WTC11 (cell line): ENCODE measurements at regions of chr20 and their contacts with region 1.

Region 1: DNA sequence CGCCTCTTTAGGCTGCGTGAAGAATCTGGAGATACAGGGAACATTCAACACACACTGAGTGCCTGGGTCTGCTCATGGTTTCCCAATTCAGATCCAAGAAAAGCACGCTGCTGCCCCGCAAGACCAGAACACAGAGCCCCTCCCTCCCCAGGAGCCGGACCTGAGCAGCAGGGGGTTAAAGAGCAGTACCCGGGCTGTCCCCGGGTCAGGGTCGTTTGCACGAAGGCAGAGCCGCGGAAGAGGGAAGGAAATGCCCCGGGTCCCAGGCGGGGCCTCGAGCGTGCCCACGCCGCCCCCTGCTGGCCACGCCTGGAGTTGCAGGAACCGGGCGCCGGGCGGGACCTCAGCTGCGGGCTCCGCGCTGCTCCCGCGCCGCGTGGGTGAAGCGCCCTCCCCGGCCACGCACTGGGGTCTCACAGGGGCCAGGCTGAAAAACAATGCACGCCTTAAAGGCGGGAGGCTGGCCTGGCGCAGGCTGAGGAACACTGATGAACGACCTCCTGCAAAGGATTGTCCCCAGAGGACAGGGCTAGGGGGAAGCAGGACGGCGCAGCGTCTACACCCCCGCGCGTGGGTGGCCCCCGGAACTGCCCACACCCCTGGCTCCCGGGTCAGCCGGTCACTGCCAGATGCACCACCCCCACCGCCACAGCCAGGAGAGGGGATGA is 48.9 kb downstream of the ANKRD60 start:
- DNase-seq: peak; percentile 73
- ATAC-seq: peak; percentile 82
- H3K4me3 Mint-ChIP-seq: peak overlapping the region; percentile 53
- H3K27ac Mint-ChIP-seq: no peak overlapping the region
- H3K4me1 Mint-ChIP-seq: peaks cover 15% of the 10 kb centered on the region
- H3K27me3 Mint-ChIP-seq: peaks cover 28% of the 10 kb centered on the region
- CTCF ChIP-seq: peak; percentile 99

Region 2: DNA sequence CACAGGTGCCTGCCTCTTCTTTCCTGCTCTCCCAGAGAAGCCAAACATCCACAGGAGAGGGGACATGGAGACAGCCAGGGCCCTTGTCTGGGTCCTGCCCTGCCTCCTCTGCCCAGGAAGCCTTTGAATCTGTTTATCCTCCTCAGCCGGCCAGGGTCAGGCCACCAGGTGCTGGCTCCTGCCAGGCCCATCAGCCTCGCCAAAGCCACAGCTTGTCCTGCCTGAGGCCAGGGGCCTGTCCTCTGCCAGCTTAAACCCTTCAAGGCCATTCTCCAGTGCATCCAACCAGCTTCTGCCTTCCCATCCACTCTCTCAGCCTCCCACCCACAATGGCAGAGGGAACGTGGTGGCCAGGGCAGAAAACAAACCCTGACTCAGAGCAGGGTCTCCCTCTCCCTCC is 205.7 kb before region 1 on chr20:
- CTCF ChIA-PET with region 1: no interaction called
- POLR2A ChIA-PET with region 1: no interaction called
- DNase-seq: no peak
- ATAC-seq: no peak
- H3K4me3 Mint-ChIP-seq: no peak overlapping the region
- H3K27ac Mint-ChIP-seq: no peak overlapping the region
- H3K4me1 Mint-ChIP-seq: no peaks in the 10 kb centered on the region
- H3K27me3 Mint-ChIP-seq: no peaks in the 10 kb centered on the region
- CTCF ChIP-seq: no peak

Region 3: DNA sequence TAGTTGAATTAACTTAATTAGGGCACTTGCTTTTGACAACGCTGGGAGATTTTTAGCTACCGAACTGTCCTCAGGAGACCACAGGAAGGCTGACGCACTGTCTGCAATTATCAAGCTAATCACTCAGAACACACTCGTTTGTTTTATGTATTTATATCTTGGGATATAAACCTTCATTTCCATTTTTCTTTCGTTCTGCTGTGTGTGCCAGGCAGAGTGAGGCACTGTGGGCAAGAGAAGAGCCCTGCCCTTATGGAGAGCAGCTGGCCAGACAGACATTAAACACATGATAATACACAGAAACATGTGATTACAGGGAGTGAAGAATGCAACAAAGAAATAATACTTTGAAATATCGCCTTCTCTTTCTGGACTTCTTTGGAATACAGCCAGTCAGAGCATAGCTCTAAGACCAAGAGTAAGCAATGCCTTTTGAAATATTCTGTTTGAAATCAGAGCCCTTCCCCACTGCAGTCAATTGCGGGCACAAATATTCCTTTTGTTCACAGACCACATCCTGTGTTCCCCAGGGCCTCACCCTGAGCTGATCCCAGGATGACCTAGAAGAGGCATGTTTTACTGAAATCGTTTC is 47.9 kb before region 1 on chr20:
- CTCF ChIA-PET with region 1: interaction called, 10 read pairs
- POLR2A ChIA-PET with region 1: no interaction called
- DNase-seq: no peak
- ATAC-seq: no peak
- H3K4me3 Mint-ChIP-seq: peak overlapping the region; percentile 34
- H3K27ac Mint-ChIP-seq: no peak overlapping the region
- H3K4me1 Mint-ChIP-seq: peaks cover 44% of the 10 kb centered on the region
- H3K27me3 Mint-ChIP-seq: no peaks in the 10 kb centered on the region; the same call in 1 of the 2 replicates
- CTCF ChIP-seq: no peak

Region 4: GRCh38 chr20:58169450-58169849 is 10.1 kb before region 1 on chr20:
- CTCF ChIA-PET with region 1: interaction called, 12 read pairs
- POLR2A ChIA-PET with region 1: no interaction called
- DNase-seq: no peak
- ATAC-seq: no peak
- H3K4me3 Mint-ChIP-seq: no peak overlapping the region
- H3K27ac Mint-ChIP-seq: no peak overlapping the region
- H3K4me1 Mint-ChIP-seq: peaks cover 5% of the 10 kb centered on the region
- H3K27me3 Mint-ChIP-seq: peaks cover 2% of the 10 kb centered on the region; the same call in 1 of the 2 replicates
- CTCF ChIP-seq: no peak

Region 5: GRCh38 chr20:58402827-58403226 is 223.3 kb after region 1 on chr20:
- CTCF ChIA-PET with region 1: no interaction called
- POLR2A ChIA-PET with region 1: interaction called, 10 read pairs
- DNase-seq: no peak
- ATAC-seq: no peak
- H3K4me3 Mint-ChIP-seq: no peak overlapping the region
- H3K27ac Mint-ChIP-seq: no peak overlapping the region
- H3K4me1 Mint-ChIP-seq: peaks cover 33% of the 10 kb centered on the region
- H3K27me3 Mint-ChIP-seq: no peaks in the 10 kb centered on the region
- CTCF ChIP-seq: no peak